Head of caudate nucleus (tissue), 42 donors: ENCODE measurements at regions of chr11 and their contacts with region 1.

Region 1: GRCh38 chr11:63945477-63946163 is 6.8 kb downstream of the NAA40 start:
- DNase-seq: peak; percentile 63 to 94 (median 84)

Region 2: DNA sequence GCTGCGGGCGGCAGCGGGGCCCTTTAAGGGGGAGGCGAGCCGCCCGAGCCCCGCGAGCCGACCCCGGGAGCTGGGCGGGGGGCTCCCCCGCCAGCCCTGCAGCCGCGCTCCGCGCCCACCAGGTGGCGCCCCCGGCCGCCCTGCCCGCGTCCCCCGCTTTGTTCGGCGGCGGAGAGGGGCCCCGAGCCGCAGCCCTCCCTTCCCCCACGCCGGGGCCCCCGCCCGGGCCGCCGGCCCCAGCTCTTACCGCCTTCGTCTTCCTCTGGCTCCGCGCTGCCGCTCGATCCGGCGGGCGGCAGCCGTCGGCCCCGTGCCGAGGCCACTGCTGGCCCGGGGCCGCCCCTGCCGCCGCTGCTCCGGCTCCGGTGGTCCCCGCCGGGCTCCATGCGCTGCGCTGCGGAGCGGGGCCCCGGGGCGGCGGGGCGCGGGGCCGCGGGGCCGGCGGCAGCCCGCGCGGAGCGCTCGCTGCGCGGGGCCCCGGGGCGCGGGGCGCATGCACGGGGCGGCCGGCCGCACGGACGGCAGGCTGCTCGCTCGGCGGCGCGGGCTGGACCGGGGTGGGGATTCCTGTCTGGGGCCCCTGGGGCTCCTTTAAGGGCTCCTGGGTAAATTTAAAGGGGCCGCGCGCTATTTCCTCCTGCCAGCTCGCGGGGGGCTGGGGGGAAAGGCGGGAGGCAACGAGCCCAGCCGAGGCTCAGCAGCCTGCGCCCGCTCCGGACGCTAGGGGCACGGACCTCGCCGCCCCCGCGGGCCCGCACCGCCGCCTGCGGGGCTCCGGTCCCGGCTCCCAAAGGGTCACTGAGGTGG is 177.2 kb before region 1 on chr11 and contains the start of gene ZFTA:
- intact Hi-C with region 1: loop called (anchors 10 kb)
- DNase-seq: peak in 36 of 42 donors; percentile 29 to 83 (median 62)

Region 3: GRCh38 chr11:63916837-63917691 is 28.6 kb before region 1 on chr11 and contains the start of gene RCOR2:
- intact Hi-C with region 1: loop called (anchors 2 kb)
- DNase-seq: peak; percentile 75 to 96 (median 91)

Region 4: DNA sequence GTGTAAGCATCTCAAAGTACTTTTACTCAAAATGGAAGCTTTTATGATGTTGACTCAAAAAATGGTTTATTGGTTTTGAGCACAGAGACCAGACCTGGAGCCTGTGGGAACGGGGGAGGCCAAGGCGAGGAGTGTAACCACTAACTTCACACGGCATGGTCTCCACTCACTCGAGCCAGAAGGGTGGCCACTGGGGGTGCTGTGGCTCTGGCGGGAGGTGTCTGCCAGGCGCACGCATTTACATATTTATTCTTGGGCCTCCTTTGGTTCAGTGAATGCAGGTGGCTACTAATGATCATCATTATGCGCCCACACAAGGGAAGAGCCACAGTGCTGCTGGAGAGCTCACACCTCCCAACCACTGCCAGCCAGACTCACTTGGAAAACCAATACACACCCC is 154.7 kb after region 1 on chr11:
- intact Hi-C with region 1: no loop called
- DNase-seq: peak in 24 of 42 donors; percentile 45 to 81 (median 63)